ENCODE measurements at regions of chr4 and their contacts with region 1.

Region 1: GRCh38 chr4:88803600-88804096 is 106.0 kb upstream of the NAP1L5 start:
- DNase-seq: peak in 1 of 2 donors; percentile 14
- ATAC-seq: peak; percentile 61 to 85 (median 71)
- H3K4me3 ChIP-seq: no peak overlapping the region
- H3K27ac ChIP-seq: peak overlapping the region in 4 of 10 donors; percentile 16 to 70 (median 46)
- H3K4me1 ChIP-seq: peaks cover 0 to 45% (median 12%) of the 10 kb centered on the region in 9 donors
- H3K27me3 ChIP-seq: no peaks in the 10 kb centered on the region
- CTCF ChIP-seq: no peak

Region 2: DNA sequence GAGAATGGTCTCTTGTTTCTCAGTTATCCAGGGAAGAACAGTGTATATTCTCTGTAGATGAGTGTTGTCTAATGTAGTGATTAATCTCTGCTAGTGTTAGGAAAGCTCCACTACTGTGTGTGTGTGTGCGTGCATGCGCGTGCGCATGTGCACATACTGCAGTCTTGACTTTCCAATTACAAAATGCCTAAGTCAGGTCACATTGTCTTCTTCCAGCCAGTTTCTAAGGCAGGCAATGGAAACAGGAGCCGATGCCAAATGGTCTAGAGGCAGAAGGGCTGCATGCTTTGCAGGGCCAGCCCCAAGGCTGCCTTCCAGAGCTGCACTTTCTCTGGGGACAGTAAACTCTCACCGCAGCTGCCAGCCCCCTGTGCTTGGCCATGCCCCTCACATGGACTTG is 75.5 kb before region 1 on chr4:
- intact Hi-C with region 1: loop called in 1 of 10 experiments (anchors 10 kb)
- DNase-seq: peak; percentile 30 to 47
- ATAC-seq: peak; percentile 66 to 86 (median 76)
- H3K4me3 ChIP-seq: no peak overlapping the region
- H3K27ac ChIP-seq: peak overlapping the region in 5 of 10 donors; percentile 26 to 72 (median 52)
- H3K4me1 ChIP-seq: peaks cover 3 to 52% (median 29%) of the 10 kb centered on the region in 9 donors
- H3K27me3 ChIP-seq: no peaks in the 10 kb centered on the region
- CTCF ChIP-seq: no peak

Region 3: GRCh38 chr4:88854182-88854880 is 50.7 kb after region 1 on chr4:
- intact Hi-C with region 1: loop called in 1 of 10 experiments (anchors 2 kb)
- DNase-seq: no peak
- ATAC-seq: no peak
- H3K4me3 ChIP-seq: no peak overlapping the region
- H3K27ac ChIP-seq: no peak overlapping the region
- H3K4me1 ChIP-seq: peaks cover 0 to 20% (median 0%) of the 10 kb centered on the region in 9 donors
- H3K27me3 ChIP-seq: no peaks in the 10 kb centered on the region
- CTCF ChIP-seq: no peak

Measured in heart right ventricle (tissue), 16 donors.